ENCODE measurements at regions of chr5 and their contacts with region 1.

Region 1: GRCh38 chr5:7856855-7857254 is 5.9 kb upstream of the CFAP90 start:
- DNase-seq: peak in 5 of 14 experiments; percentile 20 to 60 (median 55)
- ATAC-seq: peak; percentile 67
- H3K4me3 ChIP-seq: no peak overlapping the region
- H3K4me3 Mint-ChIP-seq: no peak overlapping the region
- H3K27ac ChIP-seq: no peak overlapping the region
- H3K27ac Mint-ChIP-seq: no peak overlapping the region
- H3K4me1 ChIP-seq: peaks cover 19% of the 10 kb centered on the region
- H3K4me1 Mint-ChIP-seq: peaks cover 30% of the 10 kb centered on the region
- H3K27me3 ChIP-seq: no peaks in the 10 kb centered on the region
- H3K27me3 Mint-ChIP-seq: no peaks in the 10 kb centered on the region
- CTCF ChIP-seq: peak; percentile 70

Region 2: DNA sequence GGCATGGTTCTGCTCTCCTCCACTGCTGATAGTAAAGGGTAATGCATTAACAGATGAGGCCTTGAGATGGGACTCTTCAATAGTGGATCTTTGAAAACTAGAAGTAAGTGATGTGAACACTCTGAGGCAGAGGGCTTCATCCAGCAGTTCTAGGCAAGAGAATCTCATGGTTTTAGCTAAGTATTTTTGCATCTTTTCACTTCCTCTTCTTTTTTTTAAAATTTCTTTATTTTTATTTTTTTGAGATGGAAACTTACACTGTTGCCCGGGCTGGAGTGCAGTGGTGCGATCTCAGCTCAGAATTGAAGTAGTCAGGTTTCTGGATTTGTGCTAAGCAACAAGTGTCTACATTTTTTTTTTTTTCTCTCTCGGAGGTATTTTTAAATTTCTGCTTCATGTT is 114.0 kb after region 1 on chr5:
- CTCF ChIA-PET with region 1: no interaction called
- POLR2A ChIA-PET with region 1: no interaction called
- intact Hi-C with region 1: no loop called
- DNase-seq: no peak
- ATAC-seq: no peak
- H3K4me3 ChIP-seq: no peak overlapping the region
- H3K4me3 Mint-ChIP-seq: no peak overlapping the region
- H3K27ac ChIP-seq: no peak overlapping the region
- H3K27ac Mint-ChIP-seq: no peak overlapping the region
- H3K4me1 ChIP-seq: no peaks in the 10 kb centered on the region
- H3K4me1 Mint-ChIP-seq: no peaks in the 10 kb centered on the region
- H3K27me3 ChIP-seq: peaks cover 0 to 5% of the 10 kb centered on the region in 2 experiments
- H3K27me3 Mint-ChIP-seq: peaks cover 5% of the 10 kb centered on the region
- CTCF ChIP-seq: no peak

Region 3: DNA sequence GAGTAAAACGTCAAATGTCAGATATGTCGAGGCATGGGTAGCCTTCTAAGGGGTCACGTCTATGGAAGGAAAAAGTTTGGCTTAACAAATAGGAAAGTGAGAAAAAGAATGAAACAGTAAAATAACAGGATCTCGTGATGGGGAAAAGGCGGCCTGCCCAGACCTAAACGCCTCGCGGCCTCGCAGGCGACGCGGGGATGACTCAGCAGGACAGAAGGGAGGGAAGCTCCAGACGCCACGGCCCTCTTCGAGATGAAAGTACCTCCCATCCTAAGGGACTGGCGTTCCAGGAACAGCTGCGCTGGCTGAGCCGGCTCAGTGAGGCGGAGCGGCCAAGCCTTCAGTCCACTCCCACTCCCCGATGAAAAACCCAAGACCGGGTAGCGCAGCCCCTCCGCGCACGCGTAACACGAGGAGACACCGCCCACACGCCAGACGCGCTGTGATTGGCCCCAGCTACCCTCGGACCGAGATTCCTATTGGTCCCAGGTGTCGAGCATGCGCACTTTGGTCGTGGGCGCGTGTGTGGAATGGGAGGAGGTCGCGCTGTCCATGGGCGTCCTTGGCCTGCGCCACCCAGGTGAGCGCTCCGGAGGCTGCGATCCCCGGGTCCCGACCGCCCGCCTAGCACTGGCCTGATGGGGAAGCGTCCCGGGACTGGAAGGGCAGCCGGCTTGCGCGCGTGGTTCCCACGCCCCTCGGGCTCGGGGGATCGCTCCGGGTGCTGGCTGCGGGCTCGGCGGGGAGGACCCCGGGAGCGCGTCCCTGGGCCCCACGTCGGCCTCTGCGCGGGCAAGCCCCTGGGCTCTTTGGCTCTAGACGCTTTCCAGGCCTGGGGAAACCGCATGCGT is 600.6 kb after region 1 on chr5:
- CTCF ChIA-PET with region 1: no interaction called
- POLR2A ChIA-PET with region 1: no interaction called
- intact Hi-C with region 1: loop called in 1 of 2 experiments (anchors 10 kb)
- DNase-seq: peak; percentile 71 to 93 (median 81)
- ATAC-seq: peak; percentile 95
- H3K4me3 ChIP-seq: peak overlapping the region; percentile 65
- H3K4me3 Mint-ChIP-seq: peak overlapping the region; percentile 91
- H3K27ac ChIP-seq: peak overlapping the region in 1 of 2 donors; percentile 7
- H3K27ac Mint-ChIP-seq: peak overlapping the region; percentile 55
- H3K4me1 ChIP-seq: peaks cover 2% of the 10 kb centered on the region
- H3K4me1 Mint-ChIP-seq: peaks cover 38% of the 10 kb centered on the region
- H3K27me3 ChIP-seq: no peaks in the 10 kb centered on the region
- H3K27me3 Mint-ChIP-seq: no peaks in the 10 kb centered on the region
- CTCF ChIP-seq: no peak

Measured in CD4-positive, alpha-beta T cell (primary cell).